ENCODE measurements at regions of chr16 and their contacts with region 1.

Region 1: GRCh38 chr16:58000706-58001676 is at the start of gene USB1:
- DNase-seq: peak; percentile 83 to 84
- H3K4me3 ChIP-seq: peak within 1 kb of the TSS; percentile 40 to 62 (median 47)
- H3K27ac ChIP-seq: peak within 1 kb of the TSS; percentile 55 to 94 (median 63)
- H3K4me1 ChIP-seq: peaks cover 34 to 49% of the 10 kb centered on the region in 2 donors
- H3K27me3 ChIP-seq: no peaks in the 10 kb centered on the region
- CTCF ChIP-seq: peak; percentile 38 to 90 (median 56)
- POLR2A ChIP-seq: peak in 1 of 2 donors; percentile 81
- total RNA-seq, gene USB1: 31.4 to 79.0 (median 60.0) TPM

Region 2: GRCh38 chr16:57757326-57757786 is 243.6 kb before region 1 on chr16:
- intact Hi-C with region 1: loop called (anchors 5 kb)
- DNase-seq: peak; percentile 83 to 90
- H3K4me3 ChIP-seq: no peak overlapping the region
- H3K27ac ChIP-seq: peak overlapping the region in 2 of 3 donors; percentile 43 to 45
- H3K4me1 ChIP-seq: peaks cover 0 to 4% of the 10 kb centered on the region in 2 donors
- H3K27me3 ChIP-seq: no peaks in the 10 kb centered on the region
- CTCF ChIP-seq: peak; percentile 89 to 96 (median 93)
- POLR2A ChIP-seq: no peak

Region 3: GRCh38 chr16:57899771-57900661 is 101.0 kb before region 1 on chr16:
- intact Hi-C with region 1: loop called (anchors 2 kb)
- DNase-seq: peak; percentile 71 to 75
- H3K4me3 ChIP-seq: no peak overlapping the region
- H3K27ac ChIP-seq: no peak overlapping the region
- H3K4me1 ChIP-seq: peaks cover 8 to 9% of the 10 kb centered on the region in 2 donors
- H3K27me3 ChIP-seq: no peaks in the 10 kb centered on the region
- CTCF ChIP-seq: peak; percentile 60 to 90 (median 82)
- POLR2A ChIP-seq: no peak

Measured in thyroid gland (tissue), 4 donors.